ENCODE measurements at regions of chr21 and their contacts with region 1.

Region 1: DNA sequence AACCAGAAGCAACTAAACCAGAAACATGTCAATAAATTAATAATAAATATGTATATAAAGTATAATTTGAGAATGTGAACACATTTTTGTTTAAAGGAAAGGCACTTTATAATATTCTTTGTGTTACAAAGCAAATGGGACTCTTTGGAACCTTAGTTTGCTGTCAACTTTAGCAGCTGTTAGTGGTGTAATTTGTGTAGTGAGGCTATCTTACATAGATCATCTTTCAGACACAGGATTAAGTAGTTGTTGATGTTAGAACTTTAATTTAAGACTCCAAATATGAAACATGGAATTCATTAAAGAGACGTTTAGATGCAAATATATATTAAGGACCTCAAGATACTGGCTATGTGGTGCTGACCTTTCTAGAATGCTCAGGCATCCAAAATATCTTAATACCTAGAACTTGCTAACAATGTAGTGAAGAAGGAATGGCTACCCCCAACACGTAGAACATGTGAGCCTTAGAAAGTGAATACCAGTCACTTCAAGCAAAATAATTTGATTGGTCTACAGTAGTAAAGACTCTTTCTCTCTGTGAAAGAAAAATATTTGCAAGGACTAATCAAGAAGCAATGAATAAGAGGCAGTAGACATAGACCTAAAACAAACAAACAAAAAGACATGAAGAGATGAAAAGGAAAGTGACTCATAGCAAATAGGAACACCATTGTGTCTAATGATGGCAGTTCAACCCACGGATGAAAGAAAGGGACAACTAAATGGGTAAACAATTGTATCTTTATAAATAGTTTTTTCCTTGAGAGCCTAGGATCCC is 811.4 kb downstream of the USP25 start:
- DNase-seq: no peak
- ATAC-seq: no peak
- H3K4me3 ChIP-seq: no peak overlapping the region
- H3K4me3 Mint-ChIP-seq: no peak overlapping the region
- H3K27ac ChIP-seq: no peak overlapping the region
- H3K27ac Mint-ChIP-seq: no peak overlapping the region
- H3K4me1 ChIP-seq: no peaks in the 10 kb centered on the region
- H3K4me1 Mint-ChIP-seq: no peaks in the 10 kb centered on the region
- H3K27me3 ChIP-seq: no peaks in the 10 kb centered on the region
- H3K27me3 Mint-ChIP-seq: no peaks in the 10 kb centered on the region
- CTCF ChIP-seq: no peak

Region 2: DNA sequence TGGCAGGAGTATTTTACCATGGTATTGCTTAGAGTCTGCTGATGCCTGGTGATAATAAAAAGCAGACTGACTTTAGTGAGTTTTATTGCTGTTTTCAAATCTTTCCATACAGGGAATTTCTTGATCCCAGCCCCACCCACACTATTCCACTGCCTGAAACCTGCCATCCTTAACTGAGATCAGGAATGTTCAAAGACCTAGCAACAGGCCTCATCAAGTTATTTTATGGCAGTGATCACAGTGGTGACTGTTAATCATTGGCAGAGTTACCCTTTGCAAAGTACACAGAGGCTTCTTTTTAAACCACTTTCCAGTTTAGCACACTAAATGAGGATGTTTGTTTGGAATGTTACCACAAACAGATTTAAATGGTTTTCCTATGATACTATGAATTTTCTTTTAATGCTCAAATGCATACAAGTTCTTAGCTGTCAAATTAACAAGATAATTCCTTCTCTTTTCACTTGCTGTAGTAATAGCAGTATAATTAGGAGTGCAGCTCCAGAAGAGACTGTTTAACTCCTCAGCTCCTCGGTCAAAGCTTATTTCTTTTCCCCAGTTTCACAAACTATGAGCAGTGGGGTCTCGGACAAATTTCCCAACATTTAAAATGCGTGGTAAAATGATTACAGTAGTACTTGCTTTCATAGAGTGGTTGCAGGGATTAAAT is 881.3 kb before region 1 on chr21:
- CTCF ChIA-PET with region 1: no interaction called
- POLR2A ChIA-PET with region 1: no interaction called
- intact Hi-C with region 1: no loop called
- DNase-seq: no peak
- ATAC-seq: no peak
- H3K4me3 ChIP-seq: no peak overlapping the region
- H3K4me3 Mint-ChIP-seq: no peak overlapping the region
- H3K27ac ChIP-seq: no peak overlapping the region
- H3K27ac Mint-ChIP-seq: no peak overlapping the region
- H3K4me1 ChIP-seq: no peaks in the 10 kb centered on the region
- H3K4me1 Mint-ChIP-seq: no peaks in the 10 kb centered on the region
- H3K27me3 ChIP-seq: no peaks in the 10 kb centered on the region
- H3K27me3 Mint-ChIP-seq: peaks cover 5% of the 10 kb centered on the region
- CTCF ChIP-seq: no peak

Region 3: DNA sequence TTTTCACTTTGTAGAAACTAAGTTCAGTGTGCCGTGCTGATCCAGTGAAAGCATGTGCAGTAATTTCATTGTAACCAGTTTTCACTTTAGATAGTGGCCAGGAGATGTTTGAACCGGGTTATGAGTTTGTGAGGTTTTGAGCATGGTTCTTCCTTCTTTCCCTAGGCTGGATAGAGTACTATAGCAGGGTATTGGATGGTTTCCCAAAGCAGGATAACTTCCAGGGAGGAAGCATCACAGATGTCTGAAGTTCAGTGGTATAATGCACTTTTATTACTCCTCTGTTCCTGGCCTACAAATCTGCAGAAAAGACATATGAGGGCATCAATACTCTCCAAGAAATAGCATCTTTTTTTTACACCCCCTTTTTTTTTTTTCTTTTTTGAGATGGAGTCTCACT is 11.7 kb after region 1 on chr21:
- CTCF ChIA-PET with region 1: no interaction called
- POLR2A ChIA-PET with region 1: no interaction called
- intact Hi-C with region 1: loop called in 1 of 2 experiments (anchors 1 kb)
- DNase-seq: no peak
- ATAC-seq: no peak
- H3K4me3 ChIP-seq: no peak overlapping the region
- H3K4me3 Mint-ChIP-seq: no peak overlapping the region
- H3K27ac ChIP-seq: no peak overlapping the region
- H3K27ac Mint-ChIP-seq: no peak overlapping the region
- H3K4me1 ChIP-seq: no peaks in the 10 kb centered on the region
- H3K4me1 Mint-ChIP-seq: no peaks in the 10 kb centered on the region
- H3K27me3 ChIP-seq: no peaks in the 10 kb centered on the region
- H3K27me3 Mint-ChIP-seq: no peaks in the 10 kb centered on the region
- CTCF ChIP-seq: no peak

Region 4: GRCh38 chr21:16579538-16579937 is 38.4 kb after region 1 on chr21:
- CTCF ChIA-PET with region 1: no interaction called
- POLR2A ChIA-PET with region 1: no interaction called
- intact Hi-C with region 1: no loop called
- DNase-seq: no peak
- ATAC-seq: no peak
- H3K4me3 ChIP-seq: no peak overlapping the region
- H3K4me3 Mint-ChIP-seq: no peak overlapping the region
- H3K27ac ChIP-seq: no peak overlapping the region
- H3K27ac Mint-ChIP-seq: no peak overlapping the region
- H3K4me1 ChIP-seq: no peaks in the 10 kb centered on the region
- H3K4me1 Mint-ChIP-seq: no peaks in the 10 kb centered on the region
- H3K27me3 ChIP-seq: no peaks in the 10 kb centered on the region
- H3K27me3 Mint-ChIP-seq: no peaks in the 10 kb centered on the region
- CTCF ChIP-seq: no peak

Region 5: DNA sequence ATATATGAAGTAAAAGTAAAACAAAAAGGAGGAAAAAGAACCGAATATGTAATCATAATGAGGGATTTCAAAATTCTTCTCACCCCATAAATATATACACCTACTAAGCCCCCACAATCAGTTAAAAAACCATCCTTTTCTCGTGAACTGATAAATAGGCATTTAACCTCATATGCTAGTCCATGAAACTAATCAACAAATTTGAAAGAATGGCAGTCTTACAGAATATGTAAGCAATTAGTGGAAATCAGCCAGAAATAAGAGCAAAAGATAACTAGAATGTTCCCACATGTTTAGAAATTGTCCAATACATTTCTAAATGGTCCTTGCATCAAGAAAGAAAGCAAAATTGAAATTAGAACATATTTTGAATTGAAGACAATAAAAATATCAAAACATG is 122.3 kb after region 1 on chr21:
- CTCF ChIA-PET with region 1: no interaction called
- POLR2A ChIA-PET with region 1: no interaction called
- intact Hi-C with region 1: no loop called
- DNase-seq: no peak
- ATAC-seq: no peak
- H3K4me3 ChIP-seq: no peak overlapping the region
- H3K4me3 Mint-ChIP-seq: no peak overlapping the region
- H3K27ac ChIP-seq: no peak overlapping the region
- H3K27ac Mint-ChIP-seq: no peak overlapping the region
- H3K4me1 ChIP-seq: no peaks in the 10 kb centered on the region
- H3K4me1 Mint-ChIP-seq: no peaks in the 10 kb centered on the region
- H3K27me3 ChIP-seq: no peaks in the 10 kb centered on the region
- H3K27me3 Mint-ChIP-seq: no peaks in the 10 kb centered on the region
- CTCF ChIP-seq: no peak